Heart right ventricle (tissue), 16 donors: ENCODE measurements at regions of chr5 and their contacts with region 1.

Region 1: GRCh38 chr5:141816598-141817372 is 61.4 kb downstream of the PCDH1 start:
- DNase-seq: peak; percentile 39 to 74
- ATAC-seq: peak; percentile 53 to 85 (median 81)
- H3K4me3 ChIP-seq: no peak overlapping the region
- H3K27ac ChIP-seq: peak overlapping the region; percentile 69 to 94 (median 82)
- H3K4me1 ChIP-seq: peaks cover 6 to 68% (median 31%) of the 10 kb centered on the region in 9 donors
- H3K27me3 ChIP-seq: peaks cover 0 to 8% (median 4%) of the 10 kb centered on the region in 7 donors
- CTCF ChIP-seq: no peak

Region 2: DNA sequence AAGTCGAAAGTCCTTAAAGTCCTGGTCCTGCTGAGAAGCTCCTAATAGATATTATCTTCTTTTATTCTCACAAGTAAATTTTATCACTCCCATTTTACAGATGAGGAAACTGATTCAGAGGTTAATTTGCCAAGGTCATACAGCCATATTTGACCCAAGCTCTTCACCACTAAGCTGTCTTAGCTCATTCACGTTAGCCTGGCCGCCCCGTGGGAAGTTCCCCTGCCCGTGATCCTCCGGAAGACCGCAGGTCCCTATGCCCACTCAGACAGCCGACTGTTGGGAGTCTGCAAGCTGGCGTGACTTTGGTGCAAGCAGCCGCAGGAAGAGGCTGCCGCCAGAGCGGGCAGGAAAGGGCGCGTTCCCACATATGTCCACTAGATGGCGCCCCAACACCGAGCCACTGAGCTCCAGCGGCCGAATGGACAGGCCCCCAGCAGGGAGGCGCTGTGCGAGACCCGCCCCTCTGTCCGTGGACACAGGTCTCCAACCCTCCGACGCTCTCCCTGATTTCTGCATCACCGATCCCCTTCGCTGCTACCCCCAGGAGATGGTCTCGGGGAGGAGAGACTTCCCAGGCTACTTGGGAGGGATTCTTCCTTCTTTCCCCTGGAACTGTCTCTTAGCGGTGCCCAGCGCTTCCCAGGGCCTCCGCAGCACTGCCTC is 124.8 kb before region 1 on chr5:
- intact Hi-C with region 1: no loop called
- DNase-seq: peak; percentile 85 to 90
- ATAC-seq: peak; percentile 83 to 96 (median 90)
- H3K4me3 ChIP-seq: peak overlapping the region in 8 of 10 donors; percentile 18 to 48 (median 40)
- H3K27ac ChIP-seq: peak overlapping the region in 1 of 10 donors; percentile 28
- H3K4me1 ChIP-seq: peaks cover 0 to 39% (median 20%) of the 10 kb centered on the region in 9 donors
- H3K27me3 ChIP-seq: no peaks in the 10 kb centered on the region
- CTCF ChIP-seq: peak; percentile 99 to 100 (median 99)

Region 3: GRCh38 chr5:141771031-141771430 is 45.8 kb before region 1 on chr5:
- intact Hi-C with region 1: no loop called
- DNase-seq: no peak
- ATAC-seq: peak in 3 of 8 donors; percentile 28 to 41 (median 28)
- H3K4me3 ChIP-seq: no peak overlapping the region
- H3K27ac ChIP-seq: no peak overlapping the region
- H3K4me1 ChIP-seq: peaks cover 0 to 27% (median 18%) of the 10 kb centered on the region in 9 donors
- H3K27me3 ChIP-seq: no peaks in the 10 kb centered on the region
- CTCF ChIP-seq: no peak

Region 4: GRCh38 chr5:141787376-141787775 is 29.4 kb before region 1 on chr5:
- intact Hi-C with region 1: no loop called
- DNase-seq: no peak
- ATAC-seq: no peak
- H3K4me3 ChIP-seq: no peak overlapping the region
- H3K27ac ChIP-seq: no peak overlapping the region
- H3K4me1 ChIP-seq: peaks cover 0 to 21% (median 0%) of the 10 kb centered on the region in 9 donors
- H3K27me3 ChIP-seq: peaks cover 0 to 15% (median 0%) of the 10 kb centered on the region in 7 donors
- CTCF ChIP-seq: no peak

Region 5: GRCh38 chr5:141849375-141850243 is 32.8 kb after region 1 on chr5:
- intact Hi-C with region 1: loop called in 1 of 10 experiments (anchors 2 kb)
- DNase-seq: peak; percentile 90 to 93
- ATAC-seq: peak; percentile 84 to 95 (median 93)
- H3K4me3 ChIP-seq: peak overlapping the region; percentile 48 to 85 (median 68)
- H3K27ac ChIP-seq: peak overlapping the region; percentile 59 to 99 (median 96)
- H3K4me1 ChIP-seq: peaks cover 5 to 54% (median 33%) of the 10 kb centered on the region in 9 donors
- H3K27me3 ChIP-seq: peaks cover 0 to 9% (median 0%) of the 10 kb centered on the region in 7 donors
- CTCF ChIP-seq: peak in 2 of 9 donors; percentile 9 to 22

Region 6: GRCh38 chr5:141951332-141951781 is 134.6 kb after region 1 on chr5:
- intact Hi-C with region 1: loop called in 1 of 10 experiments (anchors 5 kb)
- DNase-seq: peak in 1 of 2 donors; percentile 54
- ATAC-seq: peak; percentile 13 to 73 (median 62)
- H3K4me3 ChIP-seq: peak overlapping the region in 8 of 10 donors; percentile 5 to 60 (median 54)
- H3K27ac ChIP-seq: peak overlapping the region in 8 of 10 donors; percentile 14 to 89 (median 74)
- H3K4me1 ChIP-seq: peaks cover 2 to 80% (median 54%) of the 10 kb centered on the region in 9 donors
- H3K27me3 ChIP-seq: no peaks in the 10 kb centered on the region
- CTCF ChIP-seq: peak in 7 of 9 donors; percentile 34 to 54 (median 41)